Naive thymus-derived CD4-positive, alpha-beta T cell (primary cell): ENCODE measurements at regions of chr22 and their contacts with region 1.

Region 1: GRCh38 chr22:17201285-17201945 is 17.8 kb downstream of the ADA2 start:
- DNase-seq: no peak
- ATAC-seq: no peak
- H3K4me3 ChIP-seq: no peak overlapping the region
- H3K4me3 Mint-ChIP-seq: no peak overlapping the region
- H3K27ac ChIP-seq: no peak overlapping the region
- H3K27ac Mint-ChIP-seq: peak overlapping the region in 8 of 9 donors; percentile 1 to 82 (median 54)
- H3K4me1 ChIP-seq: no peaks in the 10 kb centered on the region
- H3K4me1 Mint-ChIP-seq: peaks cover 0 to 26% (median 17%) of the 10 kb centered on the region in 7 donors
- H3K27me3 ChIP-seq: no peaks in the 10 kb centered on the region
- H3K27me3 Mint-ChIP-seq: no peaks in the 10 kb centered on the region

Region 2: GRCh38 chr22:16774911-16775500 is 426.4 kb before region 1 on chr22:
- CTCF ChIA-PET with region 1: no interaction called
- POLR2A ChIA-PET with region 1: no interaction called
- intact Hi-C with region 1: no loop called
- DNase-seq: peak in 1 of 9 donors; percentile 2
- ATAC-seq: no peak
- H3K4me3 ChIP-seq: no peak overlapping the region
- H3K4me3 Mint-ChIP-seq: peak overlapping the region in 2 of 10 donors; percentile 8 to 30
- H3K27ac ChIP-seq: no peak overlapping the region
- H3K27ac Mint-ChIP-seq: no peak overlapping the region
- H3K4me1 ChIP-seq: no peaks in the 10 kb centered on the region
- H3K4me1 Mint-ChIP-seq: peaks cover 2 to 13% (median 6%) of the 10 kb centered on the region in 7 donors
- H3K27me3 ChIP-seq: no peaks in the 10 kb centered on the region
- H3K27me3 Mint-ChIP-seq: peaks cover 0 to 19% (median 0%) of the 10 kb centered on the region in 5 donors

Region 3: DNA sequence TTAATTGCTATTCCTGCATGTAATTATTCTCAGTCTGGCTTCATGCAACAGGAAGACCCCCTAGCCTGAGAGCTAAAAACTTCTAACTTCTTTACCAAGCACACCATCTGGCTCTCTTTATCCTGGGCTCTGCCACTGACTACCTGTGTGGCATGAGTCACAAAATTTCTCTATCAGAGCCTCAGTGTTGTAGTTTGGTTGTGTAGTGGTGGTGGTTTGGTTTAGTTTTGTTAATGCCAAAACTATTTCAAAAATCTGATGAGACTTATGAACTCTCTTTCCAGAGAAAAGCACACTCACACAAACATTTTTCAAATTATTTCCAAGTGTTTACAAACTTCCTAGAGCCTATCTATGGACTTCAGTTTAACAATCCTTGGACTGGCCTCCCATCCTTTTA is 124.2 kb before region 1 on chr22:
- CTCF ChIA-PET with region 1: interaction called, 3 read pairs
- POLR2A ChIA-PET with region 1: no interaction called
- intact Hi-C with region 1: loop called in 1 of 2 experiments (anchors 1 kb)
- DNase-seq: no peak
- ATAC-seq: no peak
- H3K4me3 ChIP-seq: no peak overlapping the region
- H3K4me3 Mint-ChIP-seq: no peak overlapping the region
- H3K27ac ChIP-seq: no peak overlapping the region
- H3K27ac Mint-ChIP-seq: no peak overlapping the region
- H3K4me1 ChIP-seq: peaks cover 0 to 10% of the 10 kb centered on the region in 2 donors
- H3K4me1 Mint-ChIP-seq: peaks cover 0 to 19% (median 12%) of the 10 kb centered on the region in 7 donors
- H3K27me3 ChIP-seq: no peaks in the 10 kb centered on the region
- H3K27me3 Mint-ChIP-seq: peaks cover 0 to 38% (median 0%) of the 10 kb centered on the region in 5 donors